ENCODE measurements at regions of chr5 and their contacts with region 1.

Region 1: GRCh38 chr5:177022384-177023308 is at the start of gene ZNF346:
- DNase-seq: peak; percentile 67
- ATAC-seq: peak; percentile 97
- H3K4me3 ChIP-seq: peak within 1 kb of the TSS; percentile 79 to 86
- H3K27ac ChIP-seq: peak within 1 kb of the TSS; percentile 92
- H3K4me1 ChIP-seq: peaks cover 13% of the 10 kb centered on the region; the same call in 1 of the 2 replicates
- H3K27me3 ChIP-seq: no peaks in the 10 kb centered on the region
- CTCF ChIP-seq: no peak; the same call in 1 of the 2 replicates
- total RNA-seq, gene ZNF346: 21.3 TPM

Region 2: GRCh38 chr5:177006265-177006972 is 16.2 kb before region 1 on chr5 and contains the start of gene UIMC1:
- CTCF ChIA-PET with region 1: no interaction called
- POLR2A ChIA-PET with region 1: interaction called, 12 read pairs
- in situ Hi-C with region 1: no loop called
- intact Hi-C with region 1: no loop called
- DNase-seq: peak; percentile 72
- ATAC-seq: peak; percentile 91
- H3K4me3 ChIP-seq: peak within 1 kb of the TSS; percentile 85 to 86
- H3K27ac ChIP-seq: peak within 1 kb of the TSS; percentile 86
- H3K4me1 ChIP-seq: peaks cover 14% of the 10 kb centered on the region
- H3K27me3 ChIP-seq: no peaks in the 10 kb centered on the region
- CTCF ChIP-seq: no peak
- total RNA-seq, gene UIMC1: 37.1 TPM

Region 3: DNA sequence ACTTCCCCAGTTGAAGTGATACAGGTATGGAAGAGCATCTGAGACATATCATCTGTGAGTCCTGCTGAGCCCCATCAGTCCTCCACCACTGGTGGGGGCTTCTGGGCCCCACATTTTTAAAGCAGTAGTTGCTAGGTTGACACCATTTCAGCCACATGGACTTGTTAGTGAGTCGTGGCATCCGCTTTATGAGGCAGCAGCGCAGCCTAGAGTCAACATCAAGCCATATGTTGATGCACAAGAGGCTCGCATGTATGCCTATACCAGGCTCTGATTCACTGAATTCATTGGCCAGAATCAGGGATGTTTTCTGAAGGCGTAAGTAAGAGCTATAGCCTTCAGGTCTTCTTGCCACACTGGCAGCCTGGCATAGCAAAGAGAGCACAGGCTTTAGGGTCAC is 26.6 kb after region 1 on chr5:
- CTCF ChIA-PET with region 1: no interaction called
- POLR2A ChIA-PET with region 1: interaction called, 11 read pairs
- in situ Hi-C with region 1: no loop called
- intact Hi-C with region 1: no loop called
- DNase-seq: no peak
- ATAC-seq: no peak
- H3K4me3 ChIP-seq: no peak overlapping the region
- H3K27ac ChIP-seq: no peak overlapping the region
- H3K4me1 ChIP-seq: no peaks in the 10 kb centered on the region
- H3K27me3 ChIP-seq: no peaks in the 10 kb centered on the region
- CTCF ChIP-seq: no peak; the same call in 1 of the 2 replicates

Measured in Panc1 (cell line).